ENCODE measurements at regions of chr19 and their contacts with region 1.

Region 1: DNA sequence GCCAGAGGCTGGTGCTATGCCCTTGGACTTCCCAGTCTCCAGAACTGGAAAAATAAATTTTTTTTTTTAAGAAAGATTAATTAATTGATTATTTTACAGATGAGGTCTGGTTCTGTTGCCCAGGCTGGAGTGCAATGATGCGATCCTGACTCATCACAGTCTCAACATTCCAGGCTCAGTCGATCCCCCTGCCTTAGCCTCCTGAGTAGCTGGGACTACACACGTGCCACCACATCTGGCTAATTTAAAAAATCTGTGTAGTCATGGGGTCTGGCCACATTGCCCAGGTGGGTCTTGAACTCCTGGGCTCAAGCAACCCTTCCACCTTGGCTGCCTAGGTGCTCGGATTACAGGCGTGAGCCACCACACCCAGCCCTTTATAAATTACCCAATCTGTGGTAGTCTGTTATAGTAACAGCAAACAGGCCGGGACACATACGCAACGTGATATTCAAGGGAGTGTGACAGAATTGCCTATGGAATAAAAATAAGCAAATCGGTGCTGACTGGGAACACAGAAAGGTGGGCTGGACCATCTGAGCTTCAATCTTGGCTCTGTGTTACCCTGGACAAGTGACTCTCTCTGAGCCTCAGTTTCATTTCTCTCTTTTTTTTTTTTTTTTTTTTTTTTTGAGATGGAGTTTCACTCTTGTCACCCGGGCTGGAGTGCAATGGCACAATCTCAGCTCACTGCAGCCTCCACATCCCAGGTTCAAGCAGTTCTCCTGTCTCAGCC is 42.8 kb downstream of the PIN1 start:
- DNase-seq: peak; percentile 61
- H3K4me3 ChIP-seq: no peak overlapping the region
- H3K27ac ChIP-seq: no peak overlapping the region
- H3K4me1 ChIP-seq: peaks cover 11% of the 10 kb centered on the region
- H3K27me3 ChIP-seq: no peaks in the 10 kb centered on the region
- CTCF ChIP-seq: no peak

Region 2: DNA sequence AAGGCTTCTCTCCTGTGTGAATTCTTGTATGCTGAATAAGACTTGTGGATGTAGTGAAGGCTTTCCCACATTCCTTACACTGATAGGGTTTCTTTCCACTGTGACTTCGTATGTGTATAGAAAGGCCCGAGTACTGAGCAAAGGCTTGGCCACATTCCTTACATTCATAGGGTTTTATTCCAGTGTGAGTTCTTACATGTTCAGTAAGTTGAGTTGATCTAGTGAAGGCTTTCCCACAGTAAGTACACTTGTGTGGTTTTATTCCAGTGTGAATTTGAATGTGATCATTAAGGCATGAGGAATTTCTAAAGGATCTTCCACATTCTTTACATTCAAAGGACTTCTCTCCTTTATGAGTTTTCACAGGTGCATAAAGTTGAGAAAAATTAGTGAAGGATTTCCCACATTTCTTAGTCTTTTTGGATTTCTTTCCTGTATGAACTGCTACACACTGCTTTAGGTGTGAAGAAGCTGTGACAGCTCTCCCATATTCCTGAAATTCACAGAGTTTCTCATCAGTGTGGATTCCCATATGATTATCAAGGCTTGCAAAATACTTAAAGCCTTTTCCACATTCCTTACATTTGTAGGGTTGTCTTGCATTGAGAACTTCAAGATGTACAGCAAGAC is 267.3 kb before region 1 on chr19:
- CTCF ChIA-PET with region 1: no interaction called
- dilution Hi-C with region 1: no loop called
- in situ Hi-C with region 1: no loop called
- intact Hi-C with region 1: no loop called
- DNase-seq: no peak
- H3K4me3 ChIP-seq: no peak overlapping the region
- H3K27ac ChIP-seq: no peak overlapping the region
- H3K4me1 ChIP-seq: no peaks in the 10 kb centered on the region
- H3K27me3 ChIP-seq: no peaks in the 10 kb centered on the region
- CTCF ChIP-seq: no peak

Region 3: GRCh38 chr19:9953802-9954542 is 76.0 kb after region 1 on chr19:
- CTCF ChIA-PET with region 1: no interaction called
- dilution Hi-C with region 1: loop called (anchors 5 kb)
- in situ Hi-C with region 1: no loop called
- intact Hi-C with region 1: no loop called
- DNase-seq: no peak
- H3K4me3 ChIP-seq: no peak overlapping the region
- H3K27ac ChIP-seq: no peak overlapping the region
- H3K4me1 ChIP-seq: no peaks in the 10 kb centered on the region
- H3K27me3 ChIP-seq: no peaks in the 10 kb centered on the region
- CTCF ChIP-seq: no peak

Measured in mammary epithelial cell (primary cell).